CD4-positive, alpha-beta T cell (primary cell): ENCODE measurements at regions of chrX and their contacts with region 1.

Region 1: GRCh38 chrX:17689971-17690409 is 47.3 kb upstream of the SCML1 start:
- DNase-seq: peak in 9 of 14 experiments; percentile 0 to 65 (median 22)
- ATAC-seq: peak; percentile 73
- H3K4me3 ChIP-seq: no peak overlapping the region
- H3K4me3 Mint-ChIP-seq: no peak overlapping the region
- H3K27ac ChIP-seq: no peak overlapping the region
- H3K27ac Mint-ChIP-seq: no peak overlapping the region
- H3K4me1 ChIP-seq: no peaks in the 10 kb centered on the region
- H3K4me1 Mint-ChIP-seq: peaks cover 5% of the 10 kb centered on the region
- H3K27me3 ChIP-seq: no peaks in the 10 kb centered on the region
- H3K27me3 Mint-ChIP-seq: no peaks in the 10 kb centered on the region
- CTCF ChIP-seq: peak; percentile 38

Region 2: GRCh38 chrX:17242470-17242869 is 447.5 kb before region 1 on chrX:
- CTCF ChIA-PET with region 1: interaction called, 3 read pairs
- POLR2A ChIA-PET with region 1: no interaction called
- intact Hi-C with region 1: loop called in 1 of 2 experiments (anchors 2 kb)
- DNase-seq: peak in 8 of 14 experiments; percentile 0 to 49 (median 14)
- ATAC-seq: no peak
- H3K4me3 ChIP-seq: no peak overlapping the region
- H3K4me3 Mint-ChIP-seq: no peak overlapping the region
- H3K27ac ChIP-seq: no peak overlapping the region
- H3K27ac Mint-ChIP-seq: no peak overlapping the region
- H3K4me1 ChIP-seq: no peaks in the 10 kb centered on the region
- H3K4me1 Mint-ChIP-seq: no peaks in the 10 kb centered on the region
- H3K27me3 ChIP-seq: no peaks in the 10 kb centered on the region
- H3K27me3 Mint-ChIP-seq: peaks cover 11% of the 10 kb centered on the region
- CTCF ChIP-seq: peak; percentile 66

Region 3: GRCh38 chrX:17535229-17535628 is 154.8 kb before region 1 on chrX:
- CTCF ChIA-PET with region 1: no interaction called
- POLR2A ChIA-PET with region 1: no interaction called
- intact Hi-C with region 1: loop called in 1 of 2 experiments (anchors 5 kb)
- DNase-seq: peak in 7 of 14 experiments; percentile 7 to 43 (median 27)
- ATAC-seq: no peak
- H3K4me3 ChIP-seq: no peak overlapping the region
- H3K4me3 Mint-ChIP-seq: no peak overlapping the region
- H3K27ac ChIP-seq: no peak overlapping the region
- H3K27ac Mint-ChIP-seq: no peak overlapping the region
- H3K4me1 ChIP-seq: no peaks in the 10 kb centered on the region
- H3K4me1 Mint-ChIP-seq: no peaks in the 10 kb centered on the region
- H3K27me3 ChIP-seq: no peaks in the 10 kb centered on the region
- H3K27me3 Mint-ChIP-seq: no peaks in the 10 kb centered on the region
- CTCF ChIP-seq: no peak